Gastrocnemius medialis (tissue), 4 donors: ENCODE measurements at regions of chr9 and their contacts with region 1.

Region 1: GRCh38 chr9:34500623-34501267 is 22.0 kb downstream of the ENHO start:
- DNase-seq: peak; percentile 27 to 53
- ATAC-seq: peak; percentile 61 to 82
- H3K4me3 ChIP-seq: no peak overlapping the region
- H3K27ac ChIP-seq: no peak overlapping the region
- H3K4me1 ChIP-seq: no peaks in the 10 kb centered on the region
- H3K27me3 ChIP-seq: no peaks in the 10 kb centered on the region
- CTCF ChIP-seq: peak; percentile 90 to 98 (median 97)
- POLR2A ChIP-seq: no peak

Region 2: DNA sequence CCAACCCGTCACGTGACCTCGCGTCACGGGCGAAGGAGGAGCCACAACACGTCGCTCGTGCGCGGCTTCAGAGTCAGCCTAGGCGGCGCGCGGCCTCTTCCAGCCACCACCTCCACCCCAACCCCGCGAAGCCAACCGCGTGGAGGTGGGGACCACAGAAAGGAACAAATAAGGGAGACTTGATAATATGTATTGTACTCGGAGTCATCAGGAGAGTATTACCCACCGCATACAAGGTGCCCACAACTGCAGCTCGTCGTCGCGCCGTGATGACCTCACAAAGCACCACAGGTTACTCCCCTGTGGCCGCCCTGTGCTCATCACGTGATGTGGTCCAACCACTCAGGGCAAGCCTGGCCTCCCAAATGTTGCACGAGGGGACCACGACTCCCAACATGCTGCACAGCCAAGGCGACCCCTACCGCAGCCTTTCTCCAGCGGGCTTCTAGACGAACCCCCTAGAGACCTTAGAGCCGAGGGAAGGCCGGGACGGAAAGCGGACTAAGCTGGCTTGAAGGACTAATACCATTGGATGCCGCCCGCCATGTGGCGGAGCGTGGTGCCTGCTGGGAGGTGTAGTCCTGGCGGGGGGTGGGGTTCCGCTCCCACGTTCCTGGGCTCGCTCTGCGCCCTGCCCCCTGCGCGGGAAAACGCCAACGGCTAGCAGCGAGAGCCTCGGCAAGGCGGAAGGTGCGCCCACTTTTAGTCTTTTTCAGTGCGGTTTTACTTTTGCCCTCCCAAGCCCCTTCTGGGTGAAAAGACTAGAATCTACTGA is 451.6 kb before region 1 on chr9:
- in situ Hi-C with region 1: no loop called
- intact Hi-C with region 1: no loop called
- DNase-seq: peak; percentile 96 to 97
- ATAC-seq: peak; percentile 95 to 96
- H3K4me3 ChIP-seq: peak overlapping the region; percentile 74 to 90 (median 85)
- H3K27ac ChIP-seq: peak overlapping the region; percentile 90 to 97 (median 94)
- H3K4me1 ChIP-seq: peaks cover 19 to 22% of the 10 kb centered on the region in 2 donors
- H3K27me3 ChIP-seq: no peaks in the 10 kb centered on the region
- CTCF ChIP-seq: peak in 3 of 5 experiments; percentile 9 to 55 (median 32)
- POLR2A ChIP-seq: peak in 1 of 2 donors; percentile 8

Region 3: GRCh38 chr9:34403554-34404380 is 97.0 kb before region 1 on chr9:
- in situ Hi-C with region 1: loop called in 3 of 4 experiments (anchors 5 to 10 kb)
- intact Hi-C with region 1: loop called (anchors 1 kb)
- DNase-seq: peak; percentile 42 to 68
- ATAC-seq: peak; percentile 70 to 79
- H3K4me3 ChIP-seq: no peak overlapping the region
- H3K27ac ChIP-seq: no peak overlapping the region
- H3K4me1 ChIP-seq: peaks cover 0 to 3% of the 10 kb centered on the region in 2 donors
- H3K27me3 ChIP-seq: no peaks in the 10 kb centered on the region
- CTCF ChIP-seq: peak; percentile 90 to 98 (median 95)
- POLR2A ChIP-seq: no peak

Region 4: GRCh38 chr9:34437006-34437925 is 63.5 kb before region 1 on chr9:
- in situ Hi-C with region 1: loop called in 1 of 4 experiments (anchors 10 kb)
- intact Hi-C with region 1: loop called (anchors 1 kb)
- DNase-seq: peak in 1 of 2 donors; percentile 51
- ATAC-seq: peak; percentile 78 to 80
- H3K4me3 ChIP-seq: no peak overlapping the region
- H3K27ac ChIP-seq: no peak overlapping the region
- H3K4me1 ChIP-seq: peaks cover 19 to 41% of the 10 kb centered on the region in 2 donors
- H3K27me3 ChIP-seq: no peaks in the 10 kb centered on the region
- CTCF ChIP-seq: peak; percentile 69 to 78 (median 70)
- POLR2A ChIP-seq: no peak

Region 5: GRCh38 chr9:34458013-34458958 is 42.5 kb before region 1 on chr9 and contains the starts of genes DNAI1 and FAM219A:
- in situ Hi-C with region 1: no loop called
- intact Hi-C with region 1: loop called (anchors 5 kb)
- DNase-seq: peak; percentile 98
- ATAC-seq: peak; percentile 89 to 92
- H3K4me3 ChIP-seq: peak within 1 kb of the TSS; percentile 68 to 95 (median 80)
- H3K27ac ChIP-seq: peak within 1 kb of the TSS; percentile 79 to 94 (median 90)
- H3K4me1 ChIP-seq: peaks cover 38 to 53% of the 10 kb centered on the region in 2 donors
- H3K27me3 ChIP-seq: no peaks in the 10 kb centered on the region
- CTCF ChIP-seq: no peak
- POLR2A ChIP-seq: peak; percentile 97 to 98
- total RNA-seq, gene DNAI1: 0.49 TPM in 1 of 4 donors, not detected in the others
- total RNA-seq, gene FAM219A: 29.5 to 58.4 (median 41.8) TPM

Region 6: GRCh38 chr9:34554211-34555001 is 53.7 kb after region 1 on chr9:
- in situ Hi-C with region 1: no loop called
- intact Hi-C with region 1: no loop called
- DNase-seq: no peak
- ATAC-seq: no peak
- H3K4me3 ChIP-seq: no peak overlapping the region
- H3K27ac ChIP-seq: peak overlapping the region in 2 of 4 donors; percentile 49 to 56
- H3K4me1 ChIP-seq: peaks cover 30% of the 10 kb centered on the region in 2 donors
- H3K27me3 ChIP-seq: no peaks in the 10 kb centered on the region
- CTCF ChIP-seq: no peak
- POLR2A ChIP-seq: no peak

Region 7: GRCh38 chr9:34675048-34675714 is 174.4 kb after region 1 on chr9:
- in situ Hi-C with region 1: no loop called
- intact Hi-C with region 1: no loop called
- DNase-seq: no peak
- ATAC-seq: no peak
- H3K4me3 ChIP-seq: no peak overlapping the region
- H3K27ac ChIP-seq: no peak overlapping the region
- H3K4me1 ChIP-seq: peaks cover 3 to 4% of the 10 kb centered on the region in 2 donors
- H3K27me3 ChIP-seq: no peaks in the 10 kb centered on the region
- CTCF ChIP-seq: peak in 2 of 5 experiments; percentile 21 to 25
- POLR2A ChIP-seq: no peak